CD8-positive, alpha-beta T cell (primary cell): ENCODE measurements at regions of chr7 and their contacts with region 1.

Region 1: DNA sequence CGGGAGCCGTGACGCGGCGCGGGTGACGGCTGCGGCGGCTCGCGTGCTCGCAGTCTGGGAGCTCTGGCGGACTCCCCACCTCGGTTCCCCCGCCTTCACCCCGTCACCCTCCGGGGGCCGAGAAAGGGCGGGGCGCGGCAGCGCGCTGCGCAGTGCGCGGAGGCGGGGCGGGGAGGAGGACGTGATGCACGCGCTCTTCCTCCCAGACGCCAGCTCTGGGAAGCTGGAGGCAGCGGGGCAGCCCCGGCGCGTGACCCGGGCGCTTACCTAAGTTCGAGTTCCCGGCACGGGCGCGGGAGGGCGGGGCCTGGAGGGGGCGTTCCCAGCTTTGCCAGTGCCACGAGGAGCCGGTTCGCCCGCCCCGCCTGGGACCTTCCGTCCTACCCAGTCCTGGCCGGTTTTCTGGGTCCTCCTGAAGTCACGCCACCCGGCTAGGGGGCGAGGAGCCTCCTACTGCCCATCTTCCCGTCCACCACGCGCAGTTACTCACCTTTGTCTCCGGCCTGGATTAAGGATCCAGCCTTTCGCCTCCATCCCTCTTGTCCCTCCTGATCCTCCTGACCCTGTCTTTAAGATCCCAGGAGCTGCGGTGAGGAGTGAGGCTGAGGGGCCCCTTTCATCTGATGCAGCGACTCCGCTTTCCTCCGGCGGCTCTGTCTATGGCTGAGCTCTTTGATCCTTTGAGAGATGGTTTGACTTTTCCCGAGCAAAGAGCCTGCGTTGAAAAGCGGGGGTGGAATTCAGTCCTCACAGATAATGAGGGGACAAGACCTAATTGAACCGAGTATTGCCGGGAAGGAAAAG is 470 bp upstream of the NAMPT start:
- DNase-seq: peak; percentile 92 to 99 (median 96)
- ATAC-seq: peak; percentile 89
- H3K4me3 ChIP-seq: peak overlapping the region; percentile 81 to 83
- H3K4me3 Mint-ChIP-seq: peak overlapping the region; percentile 96
- H3K27ac ChIP-seq: peak overlapping the region; percentile 71 to 93
- H3K27ac Mint-ChIP-seq: peak overlapping the region; percentile 98
- H3K4me1 ChIP-seq: peaks cover 17% of the 10 kb centered on the region
- H3K4me1 Mint-ChIP-seq: peaks cover 27% of the 10 kb centered on the region
- H3K27me3 ChIP-seq: no peaks in the 10 kb centered on the region
- H3K27me3 Mint-ChIP-seq: peaks cover 2% of the 10 kb centered on the region
- CTCF ChIP-seq: no peak

Region 2: GRCh38 chr7:105388373-105389087 is 896.7 kb before region 1 on chr7 and contains the start of gene SRPK2:
- CTCF ChIA-PET with region 1: no interaction called
- POLR2A ChIA-PET with region 1: no interaction called
- intact Hi-C with region 1: loop called in 1 of 2 experiments (anchors 10 kb)
- DNase-seq: peak; percentile 39 to 86 (median 76)
- ATAC-seq: peak; percentile 80
- H3K4me3 ChIP-seq: peak within 1 kb of the TSS; percentile 65 to 85
- H3K4me3 Mint-ChIP-seq: peak within 1 kb of the TSS; percentile 95
- H3K27ac ChIP-seq: peak within 1 kb of the TSS; percentile 59
- H3K27ac Mint-ChIP-seq: peak within 1 kb of the TSS; percentile 95
- H3K4me1 ChIP-seq: peaks cover 14% of the 10 kb centered on the region
- H3K4me1 Mint-ChIP-seq: peaks cover 40% of the 10 kb centered on the region
- H3K27me3 ChIP-seq: no peaks in the 10 kb centered on the region
- H3K27me3 Mint-ChIP-seq: no peaks in the 10 kb centered on the region
- CTCF ChIP-seq: no peak
- total RNA-seq, gene SRPK2: 29.2 to 29.7 TPM

Region 3: DNA sequence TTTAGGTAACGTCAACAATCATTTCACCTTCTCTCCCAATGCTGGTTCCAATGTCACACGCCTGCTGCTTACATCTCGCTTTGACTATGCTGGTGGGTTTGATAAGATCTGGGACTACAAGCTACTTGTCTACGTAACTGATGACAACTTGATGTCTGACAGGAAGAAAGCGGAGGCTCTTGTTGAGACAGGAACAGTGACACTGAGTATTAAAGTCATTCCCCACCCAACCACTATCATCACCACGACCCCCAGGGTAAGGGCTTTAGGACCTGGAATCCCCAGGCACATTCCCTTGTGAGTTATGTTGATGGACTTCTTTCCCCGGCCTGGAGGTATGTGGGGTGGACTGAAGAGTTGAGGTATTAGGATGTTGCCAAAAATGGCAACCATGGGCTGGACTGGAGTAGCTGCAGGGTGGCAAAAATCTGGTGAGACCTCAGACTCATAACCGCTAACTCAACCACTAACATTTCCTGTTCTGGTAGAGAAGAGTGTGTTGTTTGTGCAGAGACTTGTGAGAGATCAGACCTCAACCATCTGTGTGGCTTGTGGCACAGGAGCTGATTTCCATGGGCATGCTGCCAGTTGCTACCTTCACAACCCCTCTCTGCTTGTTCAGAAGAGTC is 262.9 kb before region 1 on chr7:
- CTCF ChIA-PET with region 1: no interaction called
- POLR2A ChIA-PET with region 1: no interaction called
- intact Hi-C with region 1: loop called (anchors 5 kb)
- DNase-seq: peak; percentile 62 to 96 (median 84)
- ATAC-seq: peak; percentile 85
- H3K4me3 ChIP-seq: peak overlapping the region; percentile 11 to 20
- H3K4me3 Mint-ChIP-seq: peak overlapping the region; percentile 59
- H3K27ac ChIP-seq: peak overlapping the region; percentile 80 to 82
- H3K27ac Mint-ChIP-seq: peak overlapping the region; percentile 95
- H3K4me1 ChIP-seq: peaks cover 48% of the 10 kb centered on the region
- H3K4me1 Mint-ChIP-seq: peaks cover 68% of the 10 kb centered on the region
- H3K27me3 ChIP-seq: peaks cover 0 to 3% of the 10 kb centered on the region in 2 experiments
- H3K27me3 Mint-ChIP-seq: no peaks in the 10 kb centered on the region
- CTCF ChIP-seq: no peak

Region 4: DNA sequence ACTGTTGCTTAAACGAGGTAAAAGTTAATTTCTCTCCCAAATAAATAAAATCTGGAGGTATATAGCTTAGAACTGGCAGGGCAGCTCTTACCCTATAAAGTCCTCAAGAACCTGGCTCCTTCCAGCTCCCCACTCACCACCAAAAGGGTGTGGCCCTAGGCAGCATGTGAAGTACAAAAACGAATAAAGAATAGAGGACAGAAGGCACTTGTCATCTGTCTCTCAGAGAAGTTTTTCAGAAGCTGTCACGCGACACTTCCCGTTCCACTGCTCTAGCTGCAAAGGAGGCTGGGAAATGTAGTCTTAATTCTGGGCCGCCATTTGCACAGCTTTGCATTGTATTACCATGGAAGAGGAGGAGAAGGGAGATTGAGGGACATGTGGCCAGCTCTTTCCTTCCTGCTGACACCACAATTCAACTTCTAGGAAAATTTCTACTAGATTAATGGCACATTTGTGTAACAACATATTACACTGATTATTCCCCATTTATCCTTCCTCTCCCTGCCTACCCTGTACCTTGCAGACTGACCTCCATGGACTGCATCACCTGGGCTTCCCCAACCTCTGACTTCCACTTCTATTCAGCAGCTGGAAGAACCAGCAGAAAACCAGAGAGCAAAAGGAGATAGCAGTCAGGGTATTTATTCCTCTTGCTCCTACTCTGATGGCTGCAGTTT is 313.6 kb after region 1 on chr7:
- CTCF ChIA-PET with region 1: no interaction called
- POLR2A ChIA-PET with region 1: interaction called, 7 read pairs
- intact Hi-C with region 1: loop called in 1 of 2 experiments (anchors 5 kb)
- DNase-seq: peak; percentile 26 to 87 (median 62)
- ATAC-seq: peak; percentile 99
- H3K4me3 ChIP-seq: peak overlapping the region in 1 of 2 experiments; percentile 26
- H3K4me3 Mint-ChIP-seq: peak overlapping the region; percentile 59
- H3K27ac ChIP-seq: no peak overlapping the region
- H3K27ac Mint-ChIP-seq: no peak overlapping the region
- H3K4me1 ChIP-seq: peaks cover 4% of the 10 kb centered on the region
- H3K4me1 Mint-ChIP-seq: peaks cover 6% of the 10 kb centered on the region
- H3K27me3 ChIP-seq: no peaks in the 10 kb centered on the region
- H3K27me3 Mint-ChIP-seq: no peaks in the 10 kb centered on the region
- CTCF ChIP-seq: no peak

Region 5: DNA sequence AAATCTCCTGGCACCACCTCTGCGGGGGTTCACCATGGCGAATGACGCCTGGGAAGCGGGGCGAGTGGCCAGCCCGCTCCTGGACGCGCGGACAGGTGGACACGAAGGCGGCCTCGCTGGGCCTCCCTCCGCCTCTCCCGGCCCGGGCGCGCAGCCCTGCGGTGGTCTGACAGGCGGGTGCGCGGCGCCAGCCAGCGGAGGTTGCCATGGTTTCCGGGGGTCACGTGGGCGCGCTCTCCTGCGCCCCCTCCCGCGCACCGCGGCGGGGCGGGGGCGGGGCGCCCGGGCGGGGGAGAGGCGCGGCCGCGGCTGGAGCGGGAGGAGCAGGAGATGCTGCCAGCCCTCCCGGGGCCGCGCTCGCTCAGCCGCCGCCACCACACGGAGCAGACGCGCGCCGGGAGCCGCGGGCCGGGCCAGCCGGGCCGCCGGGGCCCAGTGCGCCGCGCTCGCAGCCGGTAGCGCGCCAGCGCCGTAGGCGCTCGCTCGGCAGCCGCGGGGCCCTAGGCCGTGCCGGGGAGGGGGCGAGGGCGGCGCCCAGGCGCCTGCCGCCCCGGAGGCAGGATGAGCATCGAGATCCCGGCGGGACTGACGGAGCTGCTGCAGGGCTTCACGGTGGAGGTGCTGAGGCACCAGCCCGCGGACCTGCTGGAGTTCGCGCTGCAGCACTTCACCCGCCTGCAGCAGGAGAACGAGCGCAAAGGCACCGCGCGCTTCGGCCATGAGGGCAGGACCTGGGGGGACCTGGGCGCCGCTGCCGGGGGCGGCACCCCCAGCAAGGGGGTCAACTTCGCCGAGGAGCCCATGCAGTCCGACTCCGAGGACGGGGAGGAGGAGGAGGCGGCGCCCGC is 759.3 kb after region 1 on chr7 and contains the start of gene PRKAR2B:
- CTCF ChIA-PET with region 1: no interaction called
- POLR2A ChIA-PET with region 1: no interaction called
- intact Hi-C with region 1: loop called in 1 of 2 experiments (anchors 10 kb)
- DNase-seq: peak; percentile 55 to 91 (median 80)
- ATAC-seq: peak; percentile 93
- H3K4me3 ChIP-seq: peak within 1 kb of the TSS; percentile 50 to 58
- H3K4me3 Mint-ChIP-seq: peak within 1 kb of the TSS; percentile 86
- H3K27ac ChIP-seq: no peak within 1 kb of the TSS
- H3K27ac Mint-ChIP-seq: no peak within 1 kb of the TSS
- H3K4me1 ChIP-seq: peaks cover 13% of the 10 kb centered on the region
- H3K4me1 Mint-ChIP-seq: peaks cover 10% of the 10 kb centered on the region
- H3K27me3 ChIP-seq: peaks cover 7% of the 10 kb centered on the region in 2 experiments
- H3K27me3 Mint-ChIP-seq: peaks cover 7% of the 10 kb centered on the region
- CTCF ChIP-seq: no peak
- total RNA-seq, gene PRKAR2B: 0.33 to 0.60 TPM

Region 6: DNA sequence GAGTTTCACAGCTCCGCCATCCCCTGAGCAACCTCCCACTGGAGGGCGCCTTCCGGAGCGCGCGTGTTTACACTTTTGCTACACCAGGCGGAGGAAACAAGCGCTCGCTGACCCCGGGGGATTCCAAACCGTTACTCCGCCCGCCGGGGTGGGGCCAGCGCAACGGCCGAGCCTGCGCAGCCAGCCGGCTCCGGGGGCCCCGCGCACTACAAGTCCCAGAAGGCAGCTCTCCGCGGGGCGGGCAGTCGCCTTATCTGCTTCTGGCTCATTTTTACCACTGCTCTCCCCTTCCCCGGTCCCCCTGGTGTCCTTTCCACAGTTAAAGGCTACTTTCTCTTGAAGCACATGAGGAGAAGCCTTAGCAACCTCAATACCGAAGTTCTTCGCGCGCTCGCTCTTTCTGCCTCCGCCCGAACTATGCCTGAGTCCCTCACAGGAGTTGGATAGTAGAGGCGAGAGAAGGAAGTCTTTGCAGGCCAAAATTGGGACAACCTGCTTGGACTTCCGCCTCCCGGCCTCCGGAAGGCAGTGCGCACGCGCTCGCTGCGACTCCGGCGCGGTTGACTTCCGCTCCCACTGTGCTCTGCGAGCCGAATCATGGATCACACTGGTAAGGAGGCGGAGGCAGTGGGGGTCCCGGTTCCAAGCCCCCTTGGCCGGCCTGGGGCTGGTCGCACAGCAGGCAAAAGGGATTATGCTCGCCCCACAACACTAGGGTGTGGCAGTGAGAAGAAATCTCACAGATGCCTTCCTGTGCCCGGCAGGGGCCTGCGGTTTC is 1458.5 kb after region 1 on chr7 and contains the start of gene CBLL1:
- CTCF ChIA-PET with region 1: no interaction called
- POLR2A ChIA-PET with region 1: no interaction called
- intact Hi-C with region 1: loop called (anchors 5 to 10 kb)
- DNase-seq: peak; percentile 96 to 99 (median 98)
- ATAC-seq: peak; percentile 91
- H3K4me3 ChIP-seq: peak within 1 kb of the TSS; percentile 90 to 99
- H3K4me3 Mint-ChIP-seq: peak within 1 kb of the TSS; percentile 92
- H3K27ac ChIP-seq: peak within 1 kb of the TSS; percentile 99
- H3K27ac Mint-ChIP-seq: peak within 1 kb of the TSS; percentile 100
- H3K4me1 ChIP-seq: peaks cover 46% of the 10 kb centered on the region
- H3K4me1 Mint-ChIP-seq: peaks cover 59% of the 10 kb centered on the region
- H3K27me3 ChIP-seq: no peaks in the 10 kb centered on the region
- H3K27me3 Mint-ChIP-seq: no peaks in the 10 kb centered on the region
- CTCF ChIP-seq: peak; percentile 68
- total RNA-seq, gene CBLL1: 68.5 to 71.6 TPM